ENCODE measurements at regions of chr6 and their contacts with region 1.

Region 1: GRCh38 chr6:161748535-161749416 is 474.9 kb upstream of the AGPAT4 start:
- H3K4me3 ChIP-seq: no peak overlapping the region
- H3K27ac ChIP-seq: no peak overlapping the region
- H3K4me1 ChIP-seq: no peaks in the 10 kb centered on the region
- CTCF ChIP-seq: 0 out of 2 replicates have a peak, but pooled peaks have one; percentile 29

Region 2: GRCh38 chr6:161922631-161923119 is 173.9 kb after region 1 on chr6:
- CTCF ChIA-PET with region 1: interaction called, 16 read pairs
- POLR2A ChIA-PET with region 1: no interaction called
- H3K4me3 ChIP-seq: no peak overlapping the region
- H3K27ac ChIP-seq: no peak overlapping the region
- H3K4me1 ChIP-seq: peaks cover 3% of the 10 kb centered on the region; the same call in 1 of the 2 replicates
- CTCF ChIP-seq: no peak